ENCODE measurements at regions of chr18 and their contacts with region 1.

Region 1: DNA sequence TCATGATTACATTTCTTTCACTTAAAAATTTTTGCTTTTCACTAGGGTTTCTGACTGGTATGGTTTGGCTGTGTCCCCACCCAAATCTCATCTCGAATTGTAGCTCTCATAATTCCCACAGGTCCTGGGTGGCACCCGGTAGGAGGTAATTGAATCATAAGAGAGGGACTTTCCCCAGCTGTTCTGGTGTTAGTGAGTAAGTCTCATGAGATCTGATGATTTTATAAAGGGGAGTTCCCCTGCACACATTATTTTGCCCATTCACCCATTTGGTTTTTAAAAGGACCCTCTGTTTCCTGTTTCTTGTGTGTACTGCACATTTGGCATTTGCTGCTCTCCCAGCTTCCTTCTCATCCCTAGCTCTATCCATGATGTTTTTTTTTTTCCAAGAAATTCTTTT is 27.8 kb upstream of the NETO1 start:
- DNase-seq: no peak
- H3K4me3 Mint-ChIP-seq: no peak overlapping the region
- H3K27ac Mint-ChIP-seq: no peak overlapping the region
- H3K4me1 Mint-ChIP-seq: no peaks in the 10 kb centered on the region
- H3K27me3 Mint-ChIP-seq: no peaks in the 10 kb centered on the region

Region 2: GRCh38 chr18:72940986-72941385 is 45.4 kb after region 1 on chr18:
- intact Hi-C with region 1: loop called (anchors 2 kb)
- DNase-seq: no peak
- H3K4me3 Mint-ChIP-seq: no peak overlapping the region
- H3K27ac Mint-ChIP-seq: no peak overlapping the region
- H3K4me1 Mint-ChIP-seq: no peaks in the 10 kb centered on the region
- H3K27me3 Mint-ChIP-seq: no peaks in the 10 kb centered on the region